Endothelial cell of umbilical vein (primary cell): ENCODE measurements at regions of chr7 and their contacts with region 1.

Region 1: DNA sequence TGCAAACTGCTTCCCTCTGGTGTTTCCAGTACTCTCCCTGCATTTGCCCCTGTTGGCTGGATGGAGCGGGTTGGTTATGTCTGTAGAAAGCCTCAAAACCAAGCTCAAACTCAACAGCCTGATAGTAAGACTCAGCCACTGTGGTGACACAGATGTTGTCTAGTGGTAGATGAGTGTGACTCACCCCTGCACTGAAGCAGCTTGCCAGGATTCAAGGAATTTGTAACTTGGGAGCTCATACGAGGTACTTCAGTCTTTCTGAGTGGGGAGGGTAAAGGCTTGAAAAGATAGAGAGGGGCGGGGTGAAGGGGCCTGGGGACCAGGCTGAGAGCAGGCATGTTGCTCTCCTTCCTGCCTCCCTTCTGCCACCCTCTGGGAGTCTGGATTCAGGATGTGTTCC is 22.9 kb upstream of the AQP1 start:
- DNase-seq: peak; percentile 73
- H3K4me3 ChIP-seq: no peak overlapping the region
- H3K27ac ChIP-seq: no peak overlapping the region
- H3K4me1 ChIP-seq: peaks cover 10% of the 10 kb centered on the region
- H3K27me3 ChIP-seq: peaks cover 28% of the 10 kb centered on the region in 2 experiments
- CTCF ChIP-seq: no peak
- POLR2A ChIP-seq: no peak

Region 2: GRCh38 chr7:30184791-30185487 is 703.8 kb before region 1 on chr7:
- CTCF ChIA-PET with region 1: no interaction called
- POLR2A ChIA-PET with region 1: no interaction called
- dilution Hi-C with region 1: no loop called
- intact Hi-C with region 1: no loop called
- DNase-seq: no peak
- H3K4me3 ChIP-seq: no peak overlapping the region
- H3K27ac ChIP-seq: no peak overlapping the region
- H3K4me1 ChIP-seq: no peaks in the 10 kb centered on the region
- H3K27me3 ChIP-seq: no peaks in the 10 kb centered on the region
- CTCF ChIP-seq: no peak
- POLR2A ChIP-seq: no peak

Region 3: DNA sequence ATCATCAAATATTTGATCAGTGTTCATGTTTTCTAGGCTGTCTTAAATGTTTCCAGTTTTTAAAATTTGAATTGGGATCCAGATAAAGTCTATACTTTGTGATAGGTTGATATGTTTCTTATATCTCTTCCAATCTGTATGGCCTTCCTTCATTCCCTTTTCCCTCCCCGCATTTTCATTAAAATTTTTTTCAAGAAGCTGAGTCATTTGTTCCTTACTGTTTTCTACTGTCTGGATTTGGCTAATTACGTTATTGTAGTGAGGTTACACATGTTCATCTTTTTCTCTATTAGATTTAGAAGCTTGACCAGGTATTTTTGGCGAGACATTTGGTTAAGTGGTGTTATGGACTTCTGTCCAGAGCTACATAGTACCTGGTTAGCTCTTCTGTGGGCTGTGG is 282.9 kb before region 1 on chr7:
- CTCF ChIA-PET with region 1: no interaction called
- POLR2A ChIA-PET with region 1: interaction called, 11 read pairs
- dilution Hi-C with region 1: no loop called
- intact Hi-C with region 1: no loop called
- DNase-seq: no peak
- H3K4me3 ChIP-seq: no peak overlapping the region
- H3K27ac ChIP-seq: no peak overlapping the region
- H3K4me1 ChIP-seq: no peaks in the 10 kb centered on the region
- H3K27me3 ChIP-seq: no peaks in the 10 kb centered on the region
- CTCF ChIP-seq: no peak
- POLR2A ChIP-seq: no peak

Region 4: GRCh38 chr7:30831227-30831626 is 57.5 kb before region 1 on chr7:
- CTCF ChIA-PET with region 1: no interaction called
- POLR2A ChIA-PET with region 1: no interaction called
- dilution Hi-C with region 1: no loop called
- intact Hi-C with region 1: no loop called
- DNase-seq: no peak
- H3K4me3 ChIP-seq: no peak overlapping the region
- H3K27ac ChIP-seq: no peak overlapping the region
- H3K4me1 ChIP-seq: no peaks in the 10 kb centered on the region
- H3K27me3 ChIP-seq: no peaks in the 10 kb centered on the region
- CTCF ChIP-seq: no peak
- POLR2A ChIP-seq: no peak

Region 5: DNA sequence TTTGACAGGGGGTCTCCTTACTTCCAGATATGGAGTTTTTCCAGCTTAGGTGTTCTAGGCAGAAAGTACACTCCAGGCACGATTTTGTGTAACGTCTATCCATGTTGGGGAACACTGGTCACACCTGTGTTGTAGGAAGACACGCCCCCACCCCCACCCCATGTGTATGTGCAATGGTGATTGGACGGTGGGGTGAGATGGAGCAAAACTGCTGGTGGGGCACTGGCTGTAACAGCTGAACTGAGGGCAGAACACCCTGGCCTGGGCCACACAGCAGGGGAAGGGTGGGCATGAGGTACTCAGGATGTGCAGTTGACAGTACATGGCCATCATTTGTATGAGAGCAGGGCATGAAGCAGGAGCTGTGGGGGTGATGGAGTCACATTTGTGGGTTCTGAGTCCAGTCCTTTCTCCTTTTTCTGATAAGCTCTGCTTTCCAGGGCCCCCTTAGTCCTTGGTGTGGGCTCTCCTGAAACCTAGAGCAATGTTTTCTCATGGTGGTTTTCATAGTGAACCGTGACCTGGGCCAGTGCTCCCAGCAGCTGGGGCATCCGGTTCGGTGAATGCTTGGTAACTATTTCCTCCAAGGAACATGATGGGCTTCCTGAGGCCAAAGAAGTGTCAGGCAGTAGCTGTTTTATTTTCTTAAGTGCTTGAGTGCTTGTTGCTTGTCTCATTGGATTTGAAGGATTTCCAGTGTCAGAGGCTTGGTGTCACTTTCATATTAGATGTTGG is 40.5 kb before region 1 on chr7:
- CTCF ChIA-PET with region 1: no interaction called
- POLR2A ChIA-PET with region 1: no interaction called
- dilution Hi-C with region 1: no loop called
- intact Hi-C with region 1: loop called (anchors 2 kb)
- DNase-seq: peak; percentile 67
- H3K4me3 ChIP-seq: no peak overlapping the region
- H3K27ac ChIP-seq: no peak overlapping the region
- H3K4me1 ChIP-seq: peaks cover 30% of the 10 kb centered on the region
- H3K27me3 ChIP-seq: no peaks in the 10 kb centered on the region
- CTCF ChIP-seq: no peak
- POLR2A ChIP-seq: no peak

Region 6: DNA sequence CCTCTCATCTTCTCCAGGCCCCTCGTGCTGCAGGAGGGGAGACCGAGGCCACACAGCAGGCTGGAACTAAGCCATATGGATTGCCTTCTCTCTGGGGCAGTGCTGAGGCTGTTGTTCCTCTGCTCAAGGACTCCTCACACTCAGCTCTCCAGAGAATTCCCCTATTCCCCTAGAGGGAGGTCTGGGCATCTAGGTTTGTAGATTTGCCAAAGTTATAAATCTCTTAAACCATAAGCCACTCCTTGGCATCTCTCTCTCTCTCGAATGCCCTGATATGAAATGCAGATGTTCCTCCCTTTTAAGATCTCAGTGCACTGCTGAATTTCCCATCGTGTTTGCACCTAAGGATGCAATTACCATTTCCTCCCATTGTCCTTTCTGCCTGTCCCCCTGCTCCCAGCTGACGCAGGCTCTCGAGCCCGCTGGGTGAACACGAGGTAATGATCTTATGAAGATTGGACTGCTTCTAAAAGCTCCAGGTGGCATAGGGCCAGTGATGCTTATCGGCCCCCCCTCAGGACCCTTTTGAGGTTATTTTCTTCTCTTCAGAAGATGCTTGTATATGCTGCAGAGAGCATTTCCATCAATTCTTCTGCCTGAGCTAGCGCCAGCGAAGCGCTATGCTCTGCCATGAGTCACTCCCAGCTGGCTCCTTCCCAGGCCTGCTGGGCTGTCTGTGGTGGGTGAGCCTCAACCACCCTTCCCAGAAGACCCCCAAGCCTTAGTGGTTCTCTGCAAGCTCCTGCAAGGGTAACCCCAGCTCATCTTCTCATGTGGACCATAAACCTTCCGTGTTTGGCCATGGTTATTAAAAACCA is 18.7 kb before region 1 on chr7:
- CTCF ChIA-PET with region 1: interaction called, 10 read pairs
- POLR2A ChIA-PET with region 1: no interaction called
- dilution Hi-C with region 1: no loop called
- intact Hi-C with region 1: loop called (anchors 1 kb)
- DNase-seq: peak; percentile 93
- H3K4me3 ChIP-seq: no peak overlapping the region
- H3K27ac ChIP-seq: peak overlapping the region; percentile 36
- H3K4me1 ChIP-seq: peaks cover 19% of the 10 kb centered on the region
- H3K27me3 ChIP-seq: no peaks in the 10 kb centered on the region
- CTCF ChIP-seq: peak in 1 of 2 donors; percentile 9
- POLR2A ChIP-seq: no peak

Region 7: GRCh38 chr7:30920584-30921539 is 32.1 kb after region 1 on chr7:
- CTCF ChIA-PET with region 1: interaction called, 3 read pairs
- POLR2A ChIA-PET with region 1: no interaction called
- dilution Hi-C with region 1: no loop called
- intact Hi-C with region 1: loop called (anchors 1 kb)
- DNase-seq: peak; percentile 81
- H3K4me3 ChIP-seq: no peak overlapping the region
- H3K27ac ChIP-seq: peak overlapping the region; percentile 58
- H3K4me1 ChIP-seq: peaks cover 24% of the 10 kb centered on the region
- H3K27me3 ChIP-seq: no peaks in the 10 kb centered on the region
- CTCF ChIP-seq: no peak
- POLR2A ChIP-seq: no peak